ENCODE measurements at regions of chr22 and their contacts with region 1.

Region 1: GRCh38 chr22:36977947-36978660 is 41.1 kb downstream of the TST start:
- DNase-seq: peak; percentile 96
- H3K4me3 ChIP-seq: peak overlapping the region in 3 of 4 donors; percentile 36 to 48 (median 45)
- H3K27ac ChIP-seq: peak overlapping the region in 3 of 4 donors; percentile 19 to 59 (median 50)
- H3K4me1 ChIP-seq: peaks cover 0 to 7% (median 2%) of the 10 kb centered on the region in 4 donors
- H3K27me3 ChIP-seq: no peaks in the 10 kb centered on the region
- CTCF ChIP-seq: peak; percentile 92 to 94 (median 93)
- EP300 ChIP-seq: no peak
- POLR2A ChIP-seq: no peak

Region 2: GRCh38 chr22:36546092-36546804 is 431.9 kb before region 1 on chr22:
- intact Hi-C with region 1: loop called (anchors 10 kb)
- DNase-seq: no peak
- H3K4me3 ChIP-seq: no peak overlapping the region
- H3K27ac ChIP-seq: no peak overlapping the region
- H3K4me1 ChIP-seq: no peaks in the 10 kb centered on the region
- H3K27me3 ChIP-seq: peaks cover 0 to 36% (median 0%) of the 10 kb centered on the region in 3 donors
- CTCF ChIP-seq: peak in 1 of 4 experiments; percentile 53
- EP300 ChIP-seq: no peak
- POLR2A ChIP-seq: no peak

Region 3: GRCh38 chr22:36781656-36782627 is 196.2 kb before region 1 on chr22:
- intact Hi-C with region 1: loop called (anchors 1 kb)
- DNase-seq: peak; percentile 87
- H3K4me3 ChIP-seq: no peak overlapping the region
- H3K27ac ChIP-seq: peak overlapping the region; percentile 32 to 54 (median 46)
- H3K4me1 ChIP-seq: peaks cover 0 to 11% (median 8%) of the 10 kb centered on the region in 4 donors
- H3K27me3 ChIP-seq: no peaks in the 10 kb centered on the region
- CTCF ChIP-seq: peak; percentile 71 to 95 (median 87)
- EP300 ChIP-seq: no peak
- POLR2A ChIP-seq: no peak

Region 4: GRCh38 chr22:36873680-36874537 is 104.2 kb before region 1 on chr22:
- intact Hi-C with region 1: loop called (anchors 1 kb)
- DNase-seq: no peak
- H3K4me3 ChIP-seq: no peak overlapping the region
- H3K27ac ChIP-seq: peak overlapping the region; percentile 23 to 52 (median 43)
- H3K4me1 ChIP-seq: peaks cover 0 to 13% (median 12%) of the 10 kb centered on the region in 4 donors
- H3K27me3 ChIP-seq: peaks cover 0 to 22% (median 0%) of the 10 kb centered on the region in 3 donors
- CTCF ChIP-seq: peak; percentile 41 to 84 (median 60)
- EP300 ChIP-seq: no peak
- POLR2A ChIP-seq: no peak

Region 5: DNA sequence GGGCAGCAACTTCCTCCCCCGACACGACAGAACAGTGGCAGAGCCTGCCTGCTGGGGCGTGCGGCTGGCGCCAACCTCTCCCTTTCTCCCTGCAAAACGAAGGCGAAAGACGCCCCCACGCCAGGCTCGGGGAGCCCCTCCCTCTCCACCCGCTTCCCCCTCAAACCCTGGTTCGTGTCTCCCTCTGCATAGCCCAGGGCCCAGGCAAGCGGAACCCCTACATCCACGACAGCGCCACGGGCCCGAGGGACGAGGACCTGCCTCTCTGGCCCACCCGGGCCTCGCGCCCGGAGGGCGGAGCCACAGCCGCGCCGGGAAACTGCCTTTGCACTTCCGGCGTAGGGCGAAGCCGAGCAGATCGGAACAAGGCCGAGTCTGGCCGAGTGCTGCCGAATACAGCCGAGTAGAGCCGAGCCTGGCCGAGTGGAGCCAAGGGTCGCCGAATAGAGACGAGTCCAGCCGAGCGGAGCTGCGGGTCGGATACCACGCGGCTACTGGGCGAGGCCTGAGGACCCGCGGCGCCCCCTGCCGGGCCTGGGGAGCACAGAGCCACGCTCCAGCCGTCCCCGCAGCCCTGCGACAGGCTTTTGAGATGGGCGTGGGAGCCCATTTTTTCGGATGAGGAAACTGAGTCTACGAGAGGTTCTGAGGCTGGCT is 221.1 kb after region 1 on chr22:
- intact Hi-C with region 1: loop called (anchors 5 kb)
- DNase-seq: peak; percentile 99
- H3K4me3 ChIP-seq: peak overlapping the region; percentile 56 to 62 (median 60)
- H3K27ac ChIP-seq: peak overlapping the region; percentile 91 to 97 (median 94)
- H3K4me1 ChIP-seq: peaks cover 0 to 39% (median 35%) of the 10 kb centered on the region in 4 donors
- H3K27me3 ChIP-seq: no peaks in the 10 kb centered on the region
- CTCF ChIP-seq: peak; percentile 84 to 93 (median 88)
- EP300 ChIP-seq: no peak
- POLR2A ChIP-seq: peak; percentile 98 to 99